CD8-positive, alpha-beta T cell (primary cell): ENCODE measurements at regions of chr22 and their contacts with region 1.

Region 1: DNA sequence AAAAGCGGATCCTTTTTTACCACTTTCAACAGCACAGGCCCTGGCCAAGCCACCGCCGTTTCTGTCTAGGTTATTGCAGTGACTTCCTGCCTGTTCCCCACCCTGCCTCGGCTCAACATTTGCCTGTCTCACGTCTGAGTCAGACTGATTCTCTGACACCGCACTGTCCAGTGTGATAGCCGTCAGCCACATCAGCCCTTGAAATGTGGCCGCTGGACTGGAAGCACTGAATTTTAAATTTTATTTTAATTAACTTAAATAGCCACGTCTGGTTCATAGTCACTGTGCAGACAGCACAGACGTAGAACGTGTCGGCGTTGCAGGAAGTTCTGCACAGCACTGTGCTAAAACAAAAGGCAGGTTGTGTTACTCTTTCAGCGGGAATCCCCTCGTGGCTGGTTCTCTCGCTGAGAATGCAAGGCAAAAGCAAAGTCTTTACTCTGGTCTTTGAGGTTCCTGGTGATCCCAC is 56.3 kb upstream of the ADSL start:
- DNase-seq: peak; percentile 52 to 91 (median 76)
- ATAC-seq: peak; percentile 86
- H3K4me3 ChIP-seq: peak overlapping the region in 1 of 2 experiments; percentile 6
- H3K4me3 Mint-ChIP-seq: peak overlapping the region; percentile 59
- H3K27ac ChIP-seq: peak overlapping the region; percentile 58 to 85
- H3K27ac Mint-ChIP-seq: peak overlapping the region; percentile 98
- H3K4me1 ChIP-seq: peaks cover 31% of the 10 kb centered on the region
- H3K4me1 Mint-ChIP-seq: peaks cover 59% of the 10 kb centered on the region
- H3K27me3 ChIP-seq: no peaks in the 10 kb centered on the region
- H3K27me3 Mint-ChIP-seq: no peaks in the 10 kb centered on the region
- CTCF ChIP-seq: no peak

Region 2: DNA sequence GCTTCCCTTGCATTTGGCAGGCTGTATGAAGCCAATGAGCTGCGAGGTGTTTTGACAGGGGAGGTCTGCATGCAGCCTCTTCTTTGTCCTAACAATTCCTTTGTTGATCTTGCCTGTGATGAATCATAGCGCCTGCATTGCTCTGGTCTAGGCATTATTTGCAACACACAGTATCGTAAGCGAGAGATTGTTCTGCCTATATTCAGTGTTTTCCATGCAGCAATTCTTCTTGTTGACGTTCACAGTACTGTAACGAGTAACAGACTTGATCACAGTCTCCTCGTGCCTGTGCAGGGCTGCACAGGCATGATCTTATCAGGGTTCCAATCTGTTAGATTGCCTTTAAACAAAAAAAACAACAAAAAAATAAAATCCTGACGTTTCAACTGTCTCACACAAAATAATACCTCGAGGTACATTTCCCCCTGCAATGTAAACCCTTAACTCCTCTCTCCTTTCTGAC is 42.3 kb after region 1 on chr22:
- CTCF ChIA-PET with region 1: no interaction called
- POLR2A ChIA-PET with region 1: interaction called, 3 read pairs
- intact Hi-C with region 1: loop called in 1 of 2 experiments (anchors 5 kb)
- DNase-seq: peak in 3 of 9 experiments; percentile 34 to 62 (median 57)
- ATAC-seq: peak; percentile 72
- H3K4me3 ChIP-seq: no peak overlapping the region
- H3K4me3 Mint-ChIP-seq: peak overlapping the region; percentile 52
- H3K27ac ChIP-seq: peak overlapping the region; percentile 6 to 30
- H3K27ac Mint-ChIP-seq: peak overlapping the region; percentile 92
- H3K4me1 ChIP-seq: peaks cover 90% of the 10 kb centered on the region
- H3K4me1 Mint-ChIP-seq: peaks cover 95% of the 10 kb centered on the region
- H3K27me3 ChIP-seq: no peaks in the 10 kb centered on the region
- H3K27me3 Mint-ChIP-seq: no peaks in the 10 kb centered on the region
- CTCF ChIP-seq: no peak